ENCODE measurements at regions of chr13 and their contacts with region 1.

Region 1: DNA sequence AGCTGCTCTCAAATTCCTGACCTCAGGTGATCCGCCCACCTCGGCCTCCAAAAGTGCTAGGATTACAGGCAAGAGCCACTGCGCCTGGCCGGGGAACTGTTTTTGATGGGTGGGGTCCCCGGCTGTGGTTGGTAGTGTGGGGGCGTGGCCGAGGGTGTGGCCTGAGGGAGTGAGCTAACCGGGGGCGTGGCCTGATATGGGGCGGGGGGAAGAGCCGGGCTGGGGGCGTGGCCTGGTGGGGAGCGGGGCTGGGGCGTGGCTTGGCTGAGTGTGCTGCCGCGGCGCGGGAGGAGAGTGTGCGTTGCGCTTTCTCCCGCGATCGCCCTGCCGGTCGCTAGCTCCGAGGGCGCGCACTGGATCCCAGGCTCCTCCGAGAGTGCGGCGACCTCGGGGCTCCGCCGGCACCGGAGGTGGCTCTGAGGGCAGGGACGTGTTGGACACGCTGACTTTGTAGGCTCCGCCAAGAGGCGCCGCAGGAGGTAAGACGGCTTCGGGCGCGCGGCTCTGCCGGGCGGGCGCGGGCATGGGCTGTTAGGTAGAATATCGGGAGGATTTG is at the start of gene SPATA13:
- DNase-seq: peak; percentile 94
- H3K4me3 Mint-ChIP-seq: peak within 1 kb of the TSS; percentile 83
- H3K27ac Mint-ChIP-seq: no peak within 1 kb of the TSS
- H3K4me1 Mint-ChIP-seq: peaks cover 13% of the 10 kb centered on the region
- H3K27me3 Mint-ChIP-seq: peaks cover 11% of the 10 kb centered on the region
- total RNA-seq, gene SPATA13: 50.3 to 50.8 TPM

Region 2: GRCh38 chr13:23408026-23408425 is 752.5 kb before region 1 on chr13:
- CTCF ChIA-PET with region 1: no interaction called
- POLR2A ChIA-PET with region 1: no interaction called
- intact Hi-C with region 1: no loop called
- DNase-seq: no peak
- H3K4me3 Mint-ChIP-seq: no peak overlapping the region
- H3K27ac Mint-ChIP-seq: no peak overlapping the region
- H3K4me1 Mint-ChIP-seq: peaks cover 3% of the 10 kb centered on the region
- H3K27me3 Mint-ChIP-seq: peaks cover 4% of the 10 kb centered on the region

Region 3: GRCh38 chr13:24127038-24127643 is 33.4 kb before region 1 on chr13:
- CTCF ChIA-PET with region 1: no interaction called
- POLR2A ChIA-PET with region 1: no interaction called
- intact Hi-C with region 1: loop called (anchors 5 kb)
- DNase-seq: peak; percentile 70
- H3K4me3 Mint-ChIP-seq: no peak overlapping the region
- H3K27ac Mint-ChIP-seq: no peak overlapping the region
- H3K4me1 Mint-ChIP-seq: peaks cover 25% of the 10 kb centered on the region
- H3K27me3 Mint-ChIP-seq: peaks cover 60% of the 10 kb centered on the region